Activated naive CD4-positive, alpha-beta T cell treated with anti-CD3 and anti-CD28 coated beads for 36 hours (primary cell): ENCODE measurements at regions of chr6 and their contacts with region 1.

Region 1: DNA sequence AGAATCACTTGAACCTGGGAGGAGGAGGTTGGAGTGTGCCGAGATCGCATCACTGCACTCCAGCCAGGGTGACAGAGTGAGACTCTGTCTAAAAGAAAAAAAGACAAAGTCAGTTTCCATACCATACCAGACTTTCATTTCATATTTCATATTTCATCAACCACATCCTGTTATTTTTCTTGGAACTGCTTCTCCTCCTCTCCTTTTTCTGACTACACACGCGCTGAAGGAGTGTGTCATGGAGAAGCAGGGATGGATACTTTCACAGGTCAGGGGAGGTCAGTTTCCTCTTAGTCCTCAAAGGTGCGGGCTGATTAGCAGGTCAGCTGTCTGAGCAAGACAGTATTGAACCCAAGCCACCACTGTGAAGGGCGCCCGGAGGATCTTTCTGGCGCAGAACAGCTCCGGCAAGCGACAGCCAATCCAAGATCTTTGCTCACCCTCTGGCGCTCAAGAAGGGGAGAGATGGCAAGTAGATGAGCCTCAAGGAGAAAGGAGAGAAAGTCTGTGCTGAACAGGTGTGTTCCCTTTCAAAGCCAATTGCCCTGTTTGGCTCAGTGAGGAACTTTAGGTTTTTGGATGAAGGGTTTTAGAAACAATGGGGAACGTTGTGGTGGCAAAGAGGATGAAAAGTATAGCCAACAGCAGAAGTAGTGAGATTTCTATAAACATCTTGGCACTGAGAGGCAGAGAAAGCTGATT is 18.9 kb upstream of the SYNJ2 start:
- DNase-seq: peak; percentile 55
- H3K4me3 Mint-ChIP-seq: peak overlapping the region; percentile 65
- H3K27ac Mint-ChIP-seq: peak overlapping the region; percentile 89
- H3K4me1 Mint-ChIP-seq: peaks cover 21% of the 10 kb centered on the region
- H3K27me3 Mint-ChIP-seq: no peaks in the 10 kb centered on the region

Region 2: GRCh38 chr6:157644043-157644810 is 318.5 kb before region 1 on chr6:
- CTCF ChIA-PET with region 1: no interaction called
- intact Hi-C with region 1: loop called (anchors 5 kb)
- DNase-seq: peak; percentile 71
- H3K4me3 Mint-ChIP-seq: no peak overlapping the region
- H3K27ac Mint-ChIP-seq: no peak overlapping the region
- H3K4me1 Mint-ChIP-seq: peaks cover 14% of the 10 kb centered on the region
- H3K27me3 Mint-ChIP-seq: no peaks in the 10 kb centered on the region